ENCODE measurements at regions of chr2 and their contacts with region 1.

Region 1: DNA sequence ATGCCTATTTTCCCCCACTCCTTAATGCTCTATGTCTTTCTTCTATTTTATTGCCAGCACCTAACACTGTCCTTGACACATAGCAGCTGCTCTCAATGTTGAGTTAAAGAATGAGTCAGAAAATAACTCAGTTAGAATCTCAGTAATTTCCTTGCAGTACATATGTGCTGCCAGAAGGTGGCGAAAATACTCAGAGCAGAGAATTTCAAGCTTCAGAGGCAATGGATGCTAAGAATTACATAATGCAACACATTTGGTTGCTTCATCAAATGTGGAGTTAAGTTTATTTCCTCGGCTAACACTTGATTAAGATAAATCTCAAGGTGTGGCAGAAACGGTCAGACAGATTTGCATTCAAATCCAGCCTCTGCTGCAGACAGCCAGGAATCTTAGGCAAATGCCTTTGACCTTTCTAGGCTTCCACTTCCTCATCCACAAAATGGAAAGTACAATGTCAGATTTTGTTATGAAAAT is 105.6 kb downstream of the VSNL1 start:
- DNase-seq: peak; percentile 83
- ATAC-seq: peak; percentile 72
- H3K4me3 ChIP-seq: no peak overlapping the region
- H3K27ac ChIP-seq: peak overlapping the region; percentile 11
- H3K4me1 ChIP-seq: peaks cover 33% of the 10 kb centered on the region
- H3K27me3 ChIP-seq: no peaks in the 10 kb centered on the region
- CTCF ChIP-seq: peak; percentile 82
- EP300 ChIP-seq: peak in 1 of 2 experiments; percentile 16; a peak in 1 of 4 replicates
- POLR2A ChIP-seq: no peak
- RAD21 ChIP-seq: peak; percentile 56; the same call in 1 of the 2 replicates

Region 2: GRCh38 chr2:17401096-17401495 is 245.0 kb before region 1 on chr2:
- CTCF ChIA-PET with region 1: no interaction called
- POLR2A ChIA-PET with region 1: no interaction called
- in situ Hi-C with region 1: no loop called
- intact Hi-C with region 1: no loop called
- DNase-seq: no peak
- ATAC-seq: no peak
- H3K4me3 ChIP-seq: no peak overlapping the region
- H3K27ac ChIP-seq: no peak overlapping the region
- H3K4me1 ChIP-seq: no peaks in the 10 kb centered on the region
- H3K27me3 ChIP-seq: no peaks in the 10 kb centered on the region
- CTCF ChIP-seq: no peak
- EP300 ChIP-seq: no peak
- POLR2A ChIP-seq: no peak
- RAD21 ChIP-seq: no peak

Region 3: GRCh38 chr2:17470855-17471641 is 175.1 kb before region 1 on chr2:
- CTCF ChIA-PET with region 1: interaction called, 8 read pairs
- POLR2A ChIA-PET with region 1: no interaction called
- in situ Hi-C with region 1: loop called (anchors 10 kb)
- intact Hi-C with region 1: loop called (anchors 1 kb)
- DNase-seq: peak; percentile 71
- ATAC-seq: peak; percentile 99
- H3K4me3 ChIP-seq: no peak overlapping the region
- H3K27ac ChIP-seq: no peak overlapping the region
- H3K4me1 ChIP-seq: peaks cover 6% of the 10 kb centered on the region; the same call in 1 of the 2 replicates
- H3K27me3 ChIP-seq: no peaks in the 10 kb centered on the region
- CTCF ChIP-seq: peak; percentile 88
- EP300 ChIP-seq: no peak
- POLR2A ChIP-seq: no peak
- RAD21 ChIP-seq: peak; percentile 87

Region 4: DNA sequence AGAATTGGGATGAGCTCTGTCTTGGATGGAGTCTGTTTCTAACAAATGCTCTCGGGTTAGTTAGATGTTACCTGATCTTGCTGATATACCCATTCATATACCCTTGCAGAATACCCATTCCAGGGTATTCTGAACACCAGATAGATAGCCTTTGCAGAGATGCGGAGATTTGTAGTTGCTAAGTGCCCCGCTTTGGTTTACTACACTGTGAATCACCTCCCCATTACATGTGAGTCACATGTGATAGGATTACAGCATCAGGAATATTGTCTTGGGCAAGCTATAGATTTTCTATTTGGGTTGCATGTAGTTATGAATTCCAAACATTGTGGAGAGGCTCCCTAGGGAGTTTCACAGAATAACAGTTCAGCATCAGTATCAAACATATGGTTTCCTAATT is 101.9 kb before region 1 on chr2:
- CTCF ChIA-PET with region 1: no interaction called
- POLR2A ChIA-PET with region 1: interaction called, 6 read pairs
- in situ Hi-C with region 1: loop called (anchors 5 kb)
- intact Hi-C with region 1: loop called (anchors 1 kb)
- DNase-seq: peak; percentile 48
- ATAC-seq: no peak
- H3K4me3 ChIP-seq: peak overlapping the region; percentile 78 to 97 (median 83); a peak in 5 of 6 replicates
- H3K27ac ChIP-seq: peak overlapping the region; percentile 94
- H3K4me1 ChIP-seq: peaks cover 66% of the 10 kb centered on the region
- H3K27me3 ChIP-seq: peaks cover 0 to 3% of the 10 kb centered on the region in 2 experiments; a peak in 1 of 5 replicates
- CTCF ChIP-seq: no peak
- EP300 ChIP-seq: no peak; a peak in 1 of 4 replicates
- POLR2A ChIP-seq: 0 out of 4 replicates have a peak, but pooled peaks of 1 of the 2 experiments have one; percentile 19
- RAD21 ChIP-seq: no peak

Region 5: DNA sequence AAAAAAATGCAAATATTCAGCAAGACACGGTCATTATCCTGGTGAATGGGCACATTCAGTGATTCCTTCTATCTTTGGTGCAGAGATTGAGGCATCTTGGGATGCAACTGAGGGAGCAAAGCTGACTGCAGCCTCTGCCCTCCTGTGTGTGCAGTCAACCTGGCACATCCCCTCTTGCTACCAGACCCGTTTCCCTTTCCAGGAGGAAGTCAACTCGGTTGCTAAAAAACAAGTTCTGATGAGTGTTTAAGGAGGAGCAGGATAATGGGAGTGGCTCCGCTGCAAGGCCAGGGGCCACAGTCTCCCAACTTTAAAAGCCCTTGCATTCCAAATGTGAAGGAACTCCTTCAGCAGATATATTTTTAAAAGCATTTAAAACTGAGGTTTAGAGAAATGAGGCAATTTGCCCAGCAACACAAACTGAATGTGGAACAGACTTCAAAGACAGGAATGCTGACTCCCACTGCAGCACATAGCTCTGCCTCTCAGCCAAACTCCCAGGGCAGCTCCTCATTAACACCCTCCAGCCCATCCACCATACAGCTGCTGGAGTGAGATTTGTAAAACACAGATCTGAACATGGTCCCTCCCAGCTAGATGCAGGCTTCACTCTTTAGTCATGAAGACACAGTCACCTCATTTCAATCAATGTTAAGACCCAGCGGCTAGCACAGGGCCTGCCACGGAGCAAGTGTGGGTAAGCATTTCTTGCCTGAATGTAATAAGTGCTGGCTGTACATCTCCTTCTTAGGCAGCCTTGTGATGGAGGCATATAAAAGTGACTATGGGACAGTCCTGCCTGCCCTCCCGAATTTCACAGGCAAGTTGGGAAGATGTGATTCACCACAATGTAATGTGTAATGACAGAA is 51.4 kb before region 1 on chr2:
- CTCF ChIA-PET with region 1: no interaction called
- POLR2A ChIA-PET with region 1: no interaction called
- in situ Hi-C with region 1: no loop called
- intact Hi-C with region 1: loop called (anchors 1 kb)
- DNase-seq: peak; percentile 29
- ATAC-seq: peak; percentile 8; the same call in 1 of the 3 replicates
- H3K4me3 ChIP-seq: no peak overlapping the region
- H3K27ac ChIP-seq: peak overlapping the region; percentile 50
- H3K4me1 ChIP-seq: peaks cover 62% of the 10 kb centered on the region
- H3K27me3 ChIP-seq: no peaks in the 10 kb centered on the region
- CTCF ChIP-seq: no peak
- EP300 ChIP-seq: no peak
- POLR2A ChIP-seq: no peak
- RAD21 ChIP-seq: no peak

Region 6: GRCh38 chr2:17672583-17673317 is 26.6 kb after region 1 on chr2:
- CTCF ChIA-PET with region 1: interaction called, 3 read pairs
- POLR2A ChIA-PET with region 1: no interaction called
- in situ Hi-C with region 1: no loop called
- intact Hi-C with region 1: loop called (anchors 1 kb)
- DNase-seq: no peak
- ATAC-seq: no peak; the same call in 2 of the 3 replicates
- H3K4me3 ChIP-seq: no peak overlapping the region
- H3K27ac ChIP-seq: no peak overlapping the region
- H3K4me1 ChIP-seq: no peaks in the 10 kb centered on the region
- H3K27me3 ChIP-seq: no peaks in the 10 kb centered on the region
- CTCF ChIP-seq: no peak
- EP300 ChIP-seq: no peak
- POLR2A ChIP-seq: no peak
- RAD21 ChIP-seq: no peak